Gastrocnemius medialis (tissue), 4 donors: ENCODE measurements at regions of chr20 and their contacts with region 1.

Region 1: GRCh38 chr20:62065669-62066338 is at the start of gene TAF4:
- DNase-seq: peak; percentile 58 to 68
- ATAC-seq: peak; percentile 74 to 77
- H3K4me3 ChIP-seq: peak within 1 kb of the TSS; percentile 62 to 76 (median 72)
- H3K27ac ChIP-seq: peak within 1 kb of the TSS; percentile 82 to 89 (median 86)
- H3K4me1 ChIP-seq: peaks cover 48 to 49% of the 10 kb centered on the region in 2 donors
- H3K27me3 ChIP-seq: no peaks in the 10 kb centered on the region
- CTCF ChIP-seq: no peak
- POLR2A ChIP-seq: peak; percentile 86 to 90
- total RNA-seq, gene TAF4: 8.0 to 24.9 (median 13.9) TPM

Region 2: GRCh38 chr20:62025832-62026563 is 39.8 kb before region 1 on chr20:
- in situ Hi-C with region 1: no loop called
- intact Hi-C with region 1: loop called (anchors 2 kb)
- DNase-seq: no peak
- ATAC-seq: peak; percentile 73 to 74
- H3K4me3 ChIP-seq: no peak overlapping the region
- H3K27ac ChIP-seq: peak overlapping the region; percentile 4 to 56 (median 21)
- H3K4me1 ChIP-seq: peaks cover 29 to 44% of the 10 kb centered on the region in 2 donors
- H3K27me3 ChIP-seq: no peaks in the 10 kb centered on the region
- CTCF ChIP-seq: peak; percentile 33 to 50 (median 36)
- POLR2A ChIP-seq: no peak

Region 3: DNA sequence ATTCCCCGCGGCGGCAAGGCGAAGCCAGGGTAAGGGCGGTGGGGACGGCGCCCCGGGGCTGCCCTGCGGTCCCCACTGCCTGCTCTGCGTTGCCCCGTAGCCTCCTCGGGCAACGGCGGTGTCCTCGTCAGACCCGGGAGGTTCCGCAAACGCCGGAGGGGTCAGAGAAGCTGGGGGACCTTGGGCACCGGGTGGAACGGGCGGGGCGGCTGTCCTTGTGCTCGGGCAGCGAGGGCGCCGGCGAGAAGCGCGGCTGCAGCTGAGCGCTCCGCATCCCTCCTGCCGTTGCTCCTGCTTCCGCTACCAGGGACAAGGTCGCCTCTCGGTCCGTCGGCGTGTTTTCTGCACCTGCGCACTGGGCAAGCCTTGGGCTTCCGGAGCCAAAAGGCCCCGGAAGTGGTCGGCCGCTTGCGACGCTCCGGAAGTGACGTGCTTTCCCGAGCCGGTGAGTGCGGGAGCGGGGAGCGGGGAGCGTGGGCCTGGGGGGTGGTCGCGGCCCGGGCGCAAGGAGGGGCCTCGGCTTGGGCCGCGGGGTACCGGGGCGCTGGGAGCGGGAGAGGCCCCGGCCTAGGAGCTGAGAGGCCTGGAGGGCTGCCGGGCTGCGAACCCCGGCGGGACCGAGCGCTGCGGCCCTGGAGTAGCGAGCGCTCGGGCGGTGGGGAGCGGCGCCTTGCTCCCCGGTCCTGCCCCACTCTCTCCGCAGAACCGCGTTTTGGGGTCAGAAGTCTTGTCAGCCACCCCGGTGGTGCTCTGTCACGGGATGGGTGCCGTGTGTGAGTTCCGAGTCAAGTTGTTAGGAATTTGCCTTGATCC is 117.0 kb after region 1 on chr20 and contains the start of gene MTG2:
- in situ Hi-C with region 1: no loop called
- intact Hi-C with region 1: loop called (anchors 2 kb)
- DNase-seq: peak; percentile 92 to 94
- ATAC-seq: peak; percentile 98
- H3K4me3 ChIP-seq: peak within 1 kb of the TSS; percentile 77 to 99 (median 84)
- H3K27ac ChIP-seq: peak within 1 kb of the TSS; percentile 87 to 97 (median 90)
- H3K4me1 ChIP-seq: peaks cover 16 to 20% of the 10 kb centered on the region in 2 donors
- H3K27me3 ChIP-seq: no peaks in the 10 kb centered on the region
- CTCF ChIP-seq: peak in 3 of 5 experiments; percentile 14 to 25 (median 15)
- POLR2A ChIP-seq: peak; percentile 89 to 93
- total RNA-seq, gene MTG2: 21.0 to 50.8 (median 29.3) TPM